ENCODE measurements at regions of chr18 and their contacts with region 1.

Region 1: GRCh38 chr18:63422087-63422809 is at the start of gene VPS4B:
- DNase-seq: peak; percentile 97 to 100
- H3K4me3 ChIP-seq: peak within 1 kb of the TSS; percentile 94 to 99
- H3K27ac ChIP-seq: peak within 1 kb of the TSS; percentile 92 to 93
- H3K4me1 ChIP-seq: peaks cover 0 to 10% of the 10 kb centered on the region in 2 donors
- H3K27me3 ChIP-seq: no peaks in the 10 kb centered on the region
- CTCF ChIP-seq: no peak
- total RNA-seq, gene VPS4B: 16.7 TPM

Region 2: GRCh38 chr18:62186774-62187542 is 1235.3 kb before region 1 on chr18 and contains the starts of genes PIGN and RELCH:
- intact Hi-C with region 1: loop called (anchors 5 kb)
- DNase-seq: peak; percentile 96 to 99
- H3K4me3 ChIP-seq: peak within 1 kb of the TSS; percentile 79 to 98
- H3K27ac ChIP-seq: peak within 1 kb of the TSS; percentile 75 to 82
- H3K4me1 ChIP-seq: peaks cover 0 to 28% of the 10 kb centered on the region in 2 donors
- H3K27me3 ChIP-seq: no peaks in the 10 kb centered on the region
- CTCF ChIP-seq: no peak
- total RNA-seq, gene PIGN: 12.8 TPM
- total RNA-seq, gene RELCH: 26.4 TPM

Region 3: DNA sequence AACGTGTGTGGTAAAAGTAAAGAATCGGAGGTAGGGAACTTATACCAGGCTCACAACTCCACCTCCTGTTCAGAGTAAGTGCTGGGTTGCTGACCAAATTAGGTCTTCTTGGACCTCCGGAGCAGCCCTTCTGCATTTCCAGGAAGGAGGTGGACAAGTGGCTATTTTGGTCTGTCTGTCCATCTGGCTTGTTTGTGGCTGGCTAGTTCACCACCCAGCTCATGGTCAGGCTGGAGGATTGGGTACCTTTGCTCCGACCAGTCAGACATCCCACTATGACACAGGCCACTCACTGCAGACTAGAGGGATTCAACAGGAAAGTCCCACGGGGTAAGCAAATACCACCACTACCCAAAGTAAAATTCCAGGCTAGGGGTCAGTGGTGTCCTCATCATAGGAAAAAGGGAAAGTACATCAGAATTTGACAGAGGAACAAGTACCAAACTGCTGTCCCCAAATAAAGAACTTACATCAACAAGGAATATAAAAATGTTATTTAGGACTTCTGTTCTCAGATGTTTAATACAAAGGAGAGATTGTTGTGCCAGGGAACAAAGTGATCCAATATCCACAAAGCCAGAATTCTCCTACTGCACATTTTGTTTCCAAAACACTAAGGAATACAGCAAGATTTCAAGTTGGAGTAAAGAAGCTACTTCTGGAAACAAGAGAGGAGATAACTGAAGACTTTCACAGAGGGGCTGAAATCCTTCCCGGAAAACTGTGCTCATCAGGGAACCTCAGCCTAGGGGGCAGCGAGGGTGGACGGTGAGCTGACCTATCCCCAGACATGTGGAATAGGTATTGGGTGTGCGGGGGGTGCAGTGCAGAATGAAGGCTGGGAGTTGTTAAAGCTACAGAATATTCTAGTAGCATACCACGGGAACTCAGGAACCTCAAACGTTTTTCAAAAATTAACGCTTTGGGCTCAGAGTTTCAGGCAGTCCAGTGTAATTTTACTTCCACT is 159.6 kb before region 1 on chr18:
- intact Hi-C with region 1: loop called (anchors 2 kb)
- DNase-seq: peak; percentile 65 to 91
- H3K4me3 ChIP-seq: peak overlapping the region; percentile 7 to 31
- H3K27ac ChIP-seq: peak overlapping the region; percentile 85 to 94
- H3K4me1 ChIP-seq: peaks cover 0 to 20% of the 10 kb centered on the region in 2 donors
- H3K27me3 ChIP-seq: no peaks in the 10 kb centered on the region
- CTCF ChIP-seq: peak; percentile 28 to 45 (median 33)

Region 4: DNA sequence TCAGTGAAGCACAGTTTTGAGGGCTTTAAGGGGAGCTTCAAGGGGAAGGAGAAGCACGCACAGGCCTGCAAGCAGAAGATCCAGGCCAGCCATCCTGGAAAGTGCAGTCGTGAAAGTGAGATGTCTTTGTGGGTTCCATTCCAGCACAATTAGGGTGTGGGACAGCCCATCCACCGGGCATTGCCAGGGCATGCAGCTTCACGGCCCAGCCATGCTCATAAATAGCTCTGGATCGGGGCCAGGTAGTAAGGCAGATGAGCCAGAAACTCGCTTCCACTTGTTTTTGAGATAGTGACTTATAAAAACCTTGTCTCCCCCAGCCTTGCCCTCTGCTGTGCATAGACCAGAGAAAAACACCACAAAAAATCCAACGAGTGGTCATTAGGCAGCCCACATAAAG is 76.2 kb before region 1 on chr18:
- intact Hi-C with region 1: no loop called
- DNase-seq: no peak
- H3K4me3 ChIP-seq: no peak overlapping the region
- H3K27ac ChIP-seq: peak overlapping the region in 1 of 2 donors; percentile 17
- H3K4me1 ChIP-seq: peaks cover 0 to 4% of the 10 kb centered on the region in 2 donors
- H3K27me3 ChIP-seq: no peaks in the 10 kb centered on the region
- CTCF ChIP-seq: no peak

Region 5: DNA sequence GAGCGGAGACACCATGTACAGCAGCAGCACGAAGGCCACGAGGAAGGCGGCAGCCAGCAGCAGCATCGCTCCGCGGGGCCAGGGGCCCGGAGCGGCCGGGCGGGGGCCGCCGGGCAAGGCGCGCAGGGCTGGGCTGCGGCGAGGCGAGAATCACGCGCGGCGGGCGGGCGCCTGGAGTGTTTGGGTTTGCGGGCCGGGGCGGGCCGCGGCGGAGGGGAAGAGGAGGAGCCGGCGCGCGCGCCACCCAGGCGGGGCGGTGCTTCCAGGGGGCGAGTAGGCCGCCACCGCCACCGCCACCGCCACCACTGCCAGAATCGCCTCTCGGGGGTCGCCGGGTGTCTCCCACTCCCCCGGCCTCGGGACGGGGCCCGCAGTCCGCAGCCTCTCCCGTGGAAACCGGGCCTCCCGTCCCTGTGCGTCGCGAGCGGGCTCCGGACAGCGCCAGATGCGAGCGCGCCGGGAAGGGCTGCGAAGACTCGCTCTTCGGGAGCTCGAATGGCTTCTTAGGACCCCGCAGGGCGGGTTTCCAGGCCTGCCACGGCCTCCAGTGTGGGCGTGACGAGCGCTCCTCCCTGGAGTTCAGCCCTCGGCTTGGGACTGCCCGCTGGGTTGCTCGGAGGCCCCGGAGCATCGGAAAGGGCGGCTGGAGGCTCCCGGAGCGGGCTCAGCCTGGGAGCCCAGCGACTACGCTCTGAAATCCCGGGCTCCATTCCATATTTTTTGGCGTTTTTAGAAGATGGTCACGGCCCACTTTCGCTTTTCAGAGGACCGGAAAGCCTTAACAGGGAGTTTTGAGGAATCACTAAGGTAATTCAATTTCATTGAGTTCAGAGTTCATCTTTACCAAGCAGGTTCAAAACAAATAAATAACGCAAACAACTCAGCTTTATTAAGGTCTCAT is 54.9 kb before region 1 on chr18 and contains the start of gene KDSR:
- intact Hi-C with region 1: loop called (anchors 1 kb)
- DNase-seq: peak; percentile 85 to 98
- H3K4me3 ChIP-seq: peak within 1 kb of the TSS; percentile 87 to 92
- H3K27ac ChIP-seq: peak within 1 kb of the TSS; percentile 98
- H3K4me1 ChIP-seq: peaks cover 2 to 19% of the 10 kb centered on the region in 2 donors
- H3K27me3 ChIP-seq: no peaks in the 10 kb centered on the region
- CTCF ChIP-seq: no peak
- total RNA-seq, gene KDSR: 208 TPM

Region 6: DNA sequence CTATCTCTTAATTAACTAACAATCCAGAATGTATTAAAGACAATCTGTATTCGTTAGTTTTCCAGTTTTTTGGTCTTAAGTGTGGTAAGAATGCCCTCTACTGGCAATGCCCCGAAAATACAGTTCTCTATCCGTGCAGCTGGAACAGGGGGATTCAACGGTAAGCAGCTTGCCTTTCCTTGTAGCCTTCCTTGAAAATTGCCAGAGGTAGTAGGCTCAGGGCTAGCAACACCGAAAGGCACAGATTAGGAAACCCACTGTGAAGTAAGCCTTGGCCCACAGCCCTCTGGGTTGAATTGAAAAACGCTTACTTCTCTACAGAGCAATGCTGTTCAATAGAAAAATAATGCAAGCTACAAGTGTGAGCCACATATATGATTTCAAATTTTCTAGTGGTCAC is 17.1 kb after region 1 on chr18:
- intact Hi-C with region 1: loop called (anchors 2 kb)
- DNase-seq: peak in 1 of 2 donors; percentile 74
- H3K4me3 ChIP-seq: no peak overlapping the region
- H3K27ac ChIP-seq: no peak overlapping the region
- H3K4me1 ChIP-seq: peaks cover 0 to 12% of the 10 kb centered on the region in 2 donors
- H3K27me3 ChIP-seq: no peaks in the 10 kb centered on the region
- CTCF ChIP-seq: peak; percentile 56 to 79 (median 63)